Endothelial cell of umbilical vein (primary cell): ENCODE measurements at regions of chr2 and their contacts with region 1.

Region 1: GRCh38 chr2:187442378-187442777 is 5.7 kb downstream of the CALCRL start:
- DNase-seq: no peak
- H3K4me3 ChIP-seq: peak overlapping the region in 2 of 3 experiments; percentile 60 to 100
- H3K27ac ChIP-seq: peak overlapping the region; percentile 88
- H3K4me1 ChIP-seq: peaks cover 68% of the 10 kb centered on the region
- H3K27me3 ChIP-seq: no peaks in the 10 kb centered on the region
- CTCF ChIP-seq: no peak
- POLR2A ChIP-seq: no peak

Region 2: DNA sequence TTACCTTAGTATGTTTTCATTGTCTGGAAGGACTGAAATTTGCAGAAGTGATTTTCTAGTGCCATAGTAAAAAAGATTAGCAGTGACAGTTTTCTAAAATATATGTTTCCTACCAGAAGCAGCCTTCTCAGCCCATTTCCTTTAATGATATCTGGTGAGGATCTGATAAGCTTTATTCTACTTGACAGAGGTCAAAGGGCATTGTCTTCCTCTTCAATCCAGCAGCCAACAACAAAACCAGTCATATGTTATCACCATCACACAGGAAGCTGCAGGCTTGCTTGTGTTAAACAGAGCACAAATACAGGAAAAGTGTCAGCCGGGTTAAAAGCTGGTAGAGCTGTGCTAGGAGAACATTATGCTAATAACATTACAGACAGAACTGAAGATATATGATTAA is 557.8 kb before region 1 on chr2:
- CTCF ChIA-PET with region 1: interaction called, 3 read pairs
- POLR2A ChIA-PET with region 1: no interaction called
- dilution Hi-C with region 1: no loop called
- intact Hi-C with region 1: loop called (anchors 5 kb)
- DNase-seq: peak; percentile 98
- H3K4me3 ChIP-seq: no peak overlapping the region
- H3K27ac ChIP-seq: peak overlapping the region; percentile 71
- H3K4me1 ChIP-seq: peaks cover 55% of the 10 kb centered on the region
- H3K27me3 ChIP-seq: no peaks in the 10 kb centered on the region
- CTCF ChIP-seq: no peak
- POLR2A ChIP-seq: peak; percentile 86

Region 3: GRCh38 chr2:186991766-186992417 is 450.5 kb before region 1 on chr2:
- CTCF ChIA-PET with region 1: interaction called, 16 read pairs
- POLR2A ChIA-PET with region 1: no interaction called
- dilution Hi-C with region 1: no loop called
- intact Hi-C with region 1: no loop called
- DNase-seq: peak; percentile 74
- H3K4me3 ChIP-seq: no peak overlapping the region
- H3K27ac ChIP-seq: no peak overlapping the region
- H3K4me1 ChIP-seq: peaks cover 25% of the 10 kb centered on the region
- H3K27me3 ChIP-seq: no peaks in the 10 kb centered on the region
- CTCF ChIP-seq: peak; percentile 0 to 9
- POLR2A ChIP-seq: no peak

Region 4: DNA sequence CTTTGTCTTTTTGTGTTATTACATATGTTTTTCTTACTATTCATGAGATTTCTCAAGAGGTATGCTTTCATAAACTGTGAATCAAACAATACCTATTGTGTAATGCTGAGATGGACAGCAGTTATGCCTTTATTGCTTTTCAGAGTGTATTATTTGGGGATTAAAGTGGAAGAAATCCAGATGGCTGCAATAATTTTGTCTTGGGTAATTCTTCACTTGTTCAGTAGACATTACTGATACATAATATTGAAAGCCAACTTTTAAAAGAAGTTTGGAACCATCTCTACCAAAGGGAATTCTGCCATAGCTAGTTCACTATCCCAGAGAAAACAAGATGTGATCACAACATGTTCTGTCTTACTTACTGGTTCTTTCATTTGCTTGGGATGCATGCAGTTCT is 340.0 kb before region 1 on chr2:
- CTCF ChIA-PET with region 1: no interaction called
- POLR2A ChIA-PET with region 1: no interaction called
- dilution Hi-C with region 1: no loop called
- intact Hi-C with region 1: no loop called
- DNase-seq: no peak
- H3K4me3 ChIP-seq: no peak overlapping the region
- H3K27ac ChIP-seq: no peak overlapping the region
- H3K4me1 ChIP-seq: no peaks in the 10 kb centered on the region
- H3K27me3 ChIP-seq: no peaks in the 10 kb centered on the region
- CTCF ChIP-seq: no peak
- POLR2A ChIP-seq: no peak

Region 5: DNA sequence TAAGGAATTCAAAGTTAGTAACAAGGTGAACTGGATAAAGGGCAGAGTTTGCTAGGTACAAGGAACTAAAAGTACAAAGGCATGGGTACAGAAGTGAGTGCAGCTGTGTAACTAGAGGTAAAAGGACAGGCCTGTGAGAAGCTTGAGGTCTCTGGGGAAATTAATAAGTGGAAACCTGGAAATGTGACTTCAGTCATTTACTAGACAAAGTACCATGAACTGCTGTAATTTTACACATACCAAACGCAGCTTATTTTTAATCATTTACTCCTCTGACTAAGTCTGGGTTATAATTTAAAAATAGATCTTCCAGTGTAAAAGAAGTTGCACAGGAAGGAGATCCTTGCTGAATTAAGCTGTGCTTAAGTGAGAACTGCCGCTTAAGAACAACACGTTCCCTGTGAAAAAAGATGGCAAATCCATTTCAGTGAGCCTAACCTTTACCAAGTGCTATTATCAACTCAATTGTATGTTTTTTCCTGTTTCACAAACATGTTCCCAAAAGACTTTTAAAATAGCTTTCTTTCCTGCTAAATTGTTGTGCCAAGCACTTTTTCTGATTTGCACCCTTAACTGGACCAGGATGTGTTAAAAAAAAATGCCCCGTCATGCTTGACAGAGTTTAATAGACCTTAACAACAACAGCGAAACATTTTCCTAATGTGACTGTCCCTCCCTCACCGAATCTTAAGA is 38.7 kb before region 1 on chr2:
- CTCF ChIA-PET with region 1: no interaction called
- POLR2A ChIA-PET with region 1: interaction called, 4 read pairs
- dilution Hi-C with region 1: no loop called
- intact Hi-C with region 1: loop called (anchors 1 kb)
- DNase-seq: peak; percentile 92
- H3K4me3 ChIP-seq: peak overlapping the region in 1 of 3 experiments; percentile 31
- H3K27ac ChIP-seq: peak overlapping the region; percentile 83
- H3K4me1 ChIP-seq: peaks cover 67% of the 10 kb centered on the region
- H3K27me3 ChIP-seq: no peaks in the 10 kb centered on the region
- CTCF ChIP-seq: no peak
- POLR2A ChIP-seq: peak; percentile 46

Region 6: GRCh38 chr2:187499941-187500532 is 57.7 kb after region 1 on chr2:
- CTCF ChIA-PET with region 1: no interaction called
- POLR2A ChIA-PET with region 1: no interaction called
- dilution Hi-C with region 1: no loop called
- intact Hi-C with region 1: no loop called
- DNase-seq: peak; percentile 75
- H3K4me3 ChIP-seq: no peak overlapping the region
- H3K27ac ChIP-seq: peak overlapping the region; percentile 19
- H3K4me1 ChIP-seq: peaks cover 50% of the 10 kb centered on the region
- H3K27me3 ChIP-seq: no peaks in the 10 kb centered on the region
- CTCF ChIP-seq: peak; percentile 48 to 58
- POLR2A ChIP-seq: no peak